MCF 10A (cell line): ENCODE measurements at regions of chr3 and their contacts with region 1.

Region 1: DNA sequence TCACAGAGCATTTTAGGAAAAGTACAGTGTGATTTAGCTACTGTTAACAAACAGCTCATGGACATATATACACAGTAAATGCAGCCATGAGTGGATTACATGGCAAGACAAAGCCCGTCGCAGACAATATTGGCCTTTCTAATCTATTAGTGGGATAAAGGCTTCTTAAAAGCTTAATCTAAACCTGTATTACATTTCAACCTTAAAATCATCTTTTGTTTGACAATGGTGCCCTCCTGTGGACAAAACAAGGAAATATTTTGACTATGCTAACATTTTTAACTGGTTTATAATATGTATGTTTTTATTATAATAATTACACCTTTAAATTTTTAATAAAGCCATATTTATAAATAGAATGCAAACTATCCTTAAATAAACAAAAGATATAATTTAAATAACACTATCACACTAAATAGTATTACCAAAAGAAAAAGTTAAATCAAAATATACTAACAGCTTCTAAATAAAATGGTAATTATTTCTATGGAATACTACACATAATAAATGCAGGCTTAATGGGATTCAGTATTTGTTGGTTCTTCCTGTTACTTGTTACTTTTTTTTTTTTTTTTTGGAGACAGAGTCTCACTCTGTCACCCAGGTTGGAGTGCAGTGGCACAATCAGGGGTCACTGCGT is 38.6 kb downstream of the TAFA4 start:
- DNase-seq: peak; percentile 42
- H3K4me3 Mint-ChIP-seq: no peak overlapping the region
- H3K27ac Mint-ChIP-seq: no peak overlapping the region
- H3K4me1 Mint-ChIP-seq: no peaks in the 10 kb centered on the region
- H3K27me3 Mint-ChIP-seq: peaks cover 71% of the 10 kb centered on the region
- CTCF ChIP-seq: peak; percentile 27

Region 2: GRCh38 chr3:68751888-68752287 is 141.8 kb before region 1 on chr3:
- CTCF ChIA-PET with region 1: no interaction called
- POLR2A ChIA-PET with region 1: no interaction called
- intact Hi-C with region 1: no loop called
- DNase-seq: no peak
- H3K4me3 Mint-ChIP-seq: no peak overlapping the region
- H3K27ac Mint-ChIP-seq: no peak overlapping the region
- H3K4me1 Mint-ChIP-seq: no peaks in the 10 kb centered on the region
- H3K27me3 Mint-ChIP-seq: peaks cover 38% of the 10 kb centered on the region
- CTCF ChIP-seq: no peak

Region 3: DNA sequence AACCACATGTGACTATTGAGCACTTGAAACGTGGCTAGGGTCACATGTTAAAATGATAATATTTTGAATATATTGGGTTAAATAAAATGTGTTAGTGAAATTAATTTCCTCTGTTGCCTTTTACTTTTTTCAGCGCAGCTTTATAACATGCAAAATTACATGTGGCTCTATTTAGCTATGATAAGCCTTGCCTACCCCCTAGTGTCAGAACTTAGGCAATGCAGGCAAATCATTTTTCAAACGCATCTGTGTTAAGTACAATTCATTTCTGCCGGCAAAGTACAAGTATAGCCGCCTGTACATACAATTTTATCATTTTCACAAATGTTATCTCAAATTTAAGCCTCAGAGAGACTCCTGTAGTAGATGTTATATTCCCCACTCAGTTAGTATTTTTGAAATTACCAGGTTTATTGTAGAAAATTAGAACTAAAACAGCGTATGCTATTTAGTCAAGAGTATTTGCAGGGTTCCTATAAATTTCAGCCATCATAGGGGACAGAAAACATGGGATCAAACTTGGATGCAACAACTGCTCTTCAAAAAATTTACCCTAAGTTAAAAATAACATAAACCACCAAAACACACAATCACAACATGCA is 17.5 kb before region 1 on chr3:
- CTCF ChIA-PET with region 1: interaction called, 91 read pairs
- POLR2A ChIA-PET with region 1: interaction called, 3 read pairs
- intact Hi-C with region 1: no loop called
- DNase-seq: peak; percentile 74
- H3K4me3 Mint-ChIP-seq: no peak overlapping the region
- H3K27ac Mint-ChIP-seq: no peak overlapping the region
- H3K4me1 Mint-ChIP-seq: no peaks in the 10 kb centered on the region
- H3K27me3 Mint-ChIP-seq: peaks cover 76% of the 10 kb centered on the region
- CTCF ChIP-seq: peak; percentile 77

Region 4: GRCh38 chr3:68912376-68912775 is 18.7 kb after region 1 on chr3:
- CTCF ChIA-PET with region 1: interaction called, 11 read pairs
- POLR2A ChIA-PET with region 1: no interaction called
- intact Hi-C with region 1: no loop called
- DNase-seq: no peak
- H3K4me3 Mint-ChIP-seq: no peak overlapping the region
- H3K27ac Mint-ChIP-seq: no peak overlapping the region
- H3K4me1 Mint-ChIP-seq: no peaks in the 10 kb centered on the region
- H3K27me3 Mint-ChIP-seq: peaks cover 100% of the 10 kb centered on the region
- CTCF ChIP-seq: no peak

Region 5: DNA sequence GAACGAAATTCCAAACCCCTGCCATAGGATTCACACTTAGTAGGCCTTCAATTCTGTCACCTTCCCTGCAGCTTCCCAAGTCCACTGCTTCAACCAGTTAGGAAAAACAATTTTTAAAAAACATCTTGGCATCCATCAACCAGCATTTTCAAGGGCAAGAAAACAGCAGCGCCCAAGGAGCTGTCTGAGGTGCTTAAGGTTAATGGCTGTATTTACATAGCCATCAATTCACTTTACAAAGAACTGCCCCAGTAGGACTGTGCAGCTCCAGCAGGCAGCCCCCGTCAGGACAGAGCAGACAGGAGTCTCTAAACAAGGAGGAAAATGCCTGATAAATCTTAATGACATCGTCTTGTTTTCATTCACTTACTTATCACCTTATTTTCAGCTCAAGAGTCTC is 25.3 kb after region 1 on chr3:
- CTCF ChIA-PET with region 1: interaction called, 11 read pairs
- POLR2A ChIA-PET with region 1: no interaction called
- intact Hi-C with region 1: no loop called
- DNase-seq: peak; percentile 30
- H3K4me3 Mint-ChIP-seq: no peak overlapping the region
- H3K27ac Mint-ChIP-seq: no peak overlapping the region
- H3K4me1 Mint-ChIP-seq: no peaks in the 10 kb centered on the region
- H3K27me3 Mint-ChIP-seq: peaks cover 92% of the 10 kb centered on the region
- CTCF ChIP-seq: no peak